Activated CD4-positive, alpha-beta T cell treated with anti-CD3 and anti-CD28 coated beads, Interleukin-2, amount 10 ng/mL, durations not matched to agents 24 days and 14 days (primary cell): ENCODE measurements at regions of chr12 and their contacts with region 1.

Region 1: DNA sequence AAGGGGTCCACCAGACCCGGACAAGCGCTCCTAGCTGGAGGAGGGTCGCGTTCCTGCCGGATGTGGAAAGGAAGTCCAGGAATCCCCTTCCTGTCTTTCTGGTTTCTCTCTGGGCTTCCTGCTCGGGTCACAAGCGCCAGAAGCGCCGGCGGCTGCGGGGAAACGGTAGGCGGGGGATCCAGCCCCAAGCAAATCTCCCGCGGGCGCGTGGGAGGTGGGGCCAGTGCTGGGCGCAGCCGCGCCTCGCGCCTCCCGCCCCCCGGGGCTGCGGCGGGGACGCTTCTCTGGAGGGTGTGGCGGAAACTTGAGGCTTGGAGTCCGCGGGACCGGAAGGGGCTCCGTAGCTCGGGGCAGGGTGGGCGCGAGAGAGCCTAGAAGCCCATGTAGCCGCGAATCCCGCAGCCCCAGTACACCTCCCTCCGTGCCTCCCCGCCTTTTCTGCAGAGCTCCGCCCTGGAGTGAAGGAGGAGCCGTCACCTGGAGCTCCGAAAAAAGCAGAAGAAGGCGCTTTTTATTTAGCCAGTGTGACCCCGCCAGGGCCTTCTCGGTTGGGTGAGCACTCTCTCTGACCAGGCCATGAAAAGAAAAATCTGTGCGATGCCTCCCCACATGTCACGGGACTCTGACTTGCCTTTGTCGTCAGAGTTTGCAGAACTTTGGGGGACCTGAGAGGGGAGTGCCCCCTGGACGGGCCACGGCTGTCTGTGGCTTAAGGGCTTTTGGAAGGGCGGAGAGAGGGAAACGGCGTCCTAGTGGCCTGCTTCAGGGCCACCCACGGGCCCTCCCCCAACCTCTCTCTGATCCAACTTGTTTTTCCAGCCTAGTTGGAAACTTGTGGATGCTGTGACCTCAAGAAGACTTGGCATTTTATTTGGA is 21.4 kb upstream of the CLEC2D start:
- DNase-seq: peak; percentile 98
- H3K4me3 Mint-ChIP-seq: peak overlapping the region; percentile 95
- H3K27ac Mint-ChIP-seq: peak overlapping the region; percentile 97
- H3K4me1 Mint-ChIP-seq: peaks cover 57% of the 10 kb centered on the region
- H3K27me3 Mint-ChIP-seq: peaks cover 3% of the 10 kb centered on the region

Region 2: DNA sequence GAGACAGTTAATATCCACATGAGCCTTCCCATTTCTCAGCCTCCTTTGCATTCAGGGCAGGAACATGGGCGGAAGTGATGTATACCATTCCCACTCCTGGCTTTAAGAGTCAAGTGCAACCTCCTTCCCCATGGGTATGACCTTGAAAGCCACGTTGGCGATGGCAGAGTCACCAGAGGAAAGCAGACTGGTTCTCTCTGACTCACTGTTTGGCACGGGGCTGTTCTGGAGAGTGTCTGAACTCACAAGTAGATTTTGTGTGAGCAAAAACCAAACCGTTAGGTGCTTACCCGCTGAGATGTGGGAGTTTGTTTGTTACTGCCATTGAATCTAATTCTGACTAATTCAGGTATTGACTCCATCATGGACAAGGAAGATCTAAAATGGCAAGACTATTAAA is 403.2 kb before region 1 on chr12:
- intact Hi-C with region 1: loop called (anchors 10 kb)
- DNase-seq: peak; percentile 66
- H3K4me3 Mint-ChIP-seq: peak overlapping the region; percentile 15
- H3K27ac Mint-ChIP-seq: peak overlapping the region; percentile 96
- H3K4me1 Mint-ChIP-seq: peaks cover 29% of the 10 kb centered on the region
- H3K27me3 Mint-ChIP-seq: peaks cover 16% of the 10 kb centered on the region

Region 3: DNA sequence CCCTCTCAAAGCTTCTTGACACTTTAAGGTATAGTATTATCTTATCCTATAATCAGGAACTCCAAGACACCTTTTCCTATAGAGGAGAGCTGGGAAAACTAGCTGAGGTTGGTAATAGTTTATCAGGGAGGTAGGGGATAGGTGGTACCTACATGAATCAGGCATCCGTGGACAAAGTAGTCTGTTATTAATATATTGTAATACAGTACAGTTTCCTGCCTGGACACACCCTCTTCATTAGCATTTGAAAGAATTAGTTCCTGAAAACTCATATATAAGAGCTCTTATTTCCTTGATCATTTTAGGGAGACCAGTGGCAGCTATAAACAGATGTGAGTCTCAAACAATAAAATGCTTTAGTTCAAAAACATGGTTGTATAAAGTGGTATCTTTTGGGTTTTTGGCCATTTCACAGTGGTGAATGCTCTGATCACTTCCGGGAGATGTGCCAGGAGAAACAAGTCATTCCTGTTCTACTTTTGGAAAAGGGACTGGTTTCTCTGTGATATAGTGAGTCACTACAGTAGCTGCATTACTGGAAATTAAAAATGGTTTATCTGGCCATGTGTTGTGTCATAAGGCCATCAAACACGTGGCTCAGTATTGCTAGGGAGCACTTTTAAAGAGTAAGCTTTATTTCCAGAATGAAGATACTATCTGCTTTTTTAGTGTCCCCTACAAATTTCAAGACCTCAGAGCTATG is 138.4 kb before region 1 on chr12:
- intact Hi-C with region 1: no loop called
- DNase-seq: no peak
- H3K4me3 Mint-ChIP-seq: no peak overlapping the region
- H3K27ac Mint-ChIP-seq: no peak overlapping the region
- H3K4me1 Mint-ChIP-seq: peaks cover 3% of the 10 kb centered on the region
- H3K27me3 Mint-ChIP-seq: no peaks in the 10 kb centered on the region

Region 4: GRCh38 chr12:9634177-9634803 is 13.8 kb before region 1 on chr12:
- intact Hi-C with region 1: loop called (anchors 1 kb)
- DNase-seq: peak; percentile 94
- H3K4me3 Mint-ChIP-seq: peak overlapping the region; percentile 64
- H3K27ac Mint-ChIP-seq: peak overlapping the region; percentile 57
- H3K4me1 Mint-ChIP-seq: peaks cover 50% of the 10 kb centered on the region
- H3K27me3 Mint-ChIP-seq: peaks cover 4% of the 10 kb centered on the region

Region 5: DNA sequence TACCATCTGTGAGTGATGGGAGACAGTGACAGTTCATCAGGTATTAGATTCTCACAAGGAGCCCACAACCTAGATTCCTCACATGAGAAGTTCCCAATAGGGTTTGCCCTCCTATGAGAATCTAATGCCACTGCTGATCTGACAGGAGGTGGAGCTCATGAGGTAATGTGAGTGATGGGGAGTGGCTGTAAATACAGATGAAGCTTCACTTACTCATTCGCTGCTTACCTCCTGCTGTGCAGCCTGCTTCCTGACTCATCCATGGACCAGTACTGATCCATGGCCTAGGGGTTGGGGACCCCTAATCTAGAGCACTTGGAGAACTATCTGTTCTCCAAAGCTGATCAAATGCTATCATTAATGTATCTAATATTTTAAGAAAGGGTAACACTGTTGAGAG is 39.2 kb after region 1 on chr12:
- intact Hi-C with region 1: loop called (anchors 5 kb)
- DNase-seq: peak; percentile 65
- H3K4me3 Mint-ChIP-seq: no peak overlapping the region
- H3K27ac Mint-ChIP-seq: peak overlapping the region; percentile 37
- H3K4me1 Mint-ChIP-seq: peaks cover 62% of the 10 kb centered on the region
- H3K27me3 Mint-ChIP-seq: no peaks in the 10 kb centered on the region

Region 6: DNA sequence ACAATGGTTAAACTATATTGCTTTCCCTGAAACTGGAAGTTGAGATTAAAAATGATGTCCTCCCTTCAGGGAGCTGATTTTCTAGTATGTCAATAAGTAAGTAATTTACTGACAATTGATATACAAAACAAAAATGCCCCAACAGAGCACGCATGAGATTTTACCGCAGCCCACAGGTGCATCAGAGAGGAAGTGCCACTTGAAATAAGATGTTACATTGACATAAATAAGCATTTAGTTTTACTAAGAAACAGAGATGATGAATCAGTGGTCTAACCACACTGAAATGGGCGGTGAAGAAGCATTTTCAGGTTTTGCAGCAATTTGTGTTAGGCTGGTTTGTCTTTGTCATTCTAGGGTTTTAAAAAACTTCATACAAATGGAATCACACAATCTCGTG is 93.7 kb after region 1 on chr12:
- intact Hi-C with region 1: loop called (anchors 1 kb)
- DNase-seq: peak; percentile 94
- H3K4me3 Mint-ChIP-seq: peak overlapping the region; percentile 57
- H3K27ac Mint-ChIP-seq: peak overlapping the region; percentile 96
- H3K4me1 Mint-ChIP-seq: peaks cover 61% of the 10 kb centered on the region
- H3K27me3 Mint-ChIP-seq: no peaks in the 10 kb centered on the region

Region 7: GRCh38 chr12:9797722-9798619 is 149.9 kb after region 1 on chr12:
- intact Hi-C with region 1: loop called (anchors 1 kb)
- DNase-seq: peak; percentile 92
- H3K4me3 Mint-ChIP-seq: peak overlapping the region; percentile 81
- H3K27ac Mint-ChIP-seq: peak overlapping the region; percentile 78
- H3K4me1 Mint-ChIP-seq: peaks cover 43% of the 10 kb centered on the region
- H3K27me3 Mint-ChIP-seq: peaks cover 8% of the 10 kb centered on the region